ENCODE measurements at regions of chr21 and their contacts with region 1.

Region 1: DNA sequence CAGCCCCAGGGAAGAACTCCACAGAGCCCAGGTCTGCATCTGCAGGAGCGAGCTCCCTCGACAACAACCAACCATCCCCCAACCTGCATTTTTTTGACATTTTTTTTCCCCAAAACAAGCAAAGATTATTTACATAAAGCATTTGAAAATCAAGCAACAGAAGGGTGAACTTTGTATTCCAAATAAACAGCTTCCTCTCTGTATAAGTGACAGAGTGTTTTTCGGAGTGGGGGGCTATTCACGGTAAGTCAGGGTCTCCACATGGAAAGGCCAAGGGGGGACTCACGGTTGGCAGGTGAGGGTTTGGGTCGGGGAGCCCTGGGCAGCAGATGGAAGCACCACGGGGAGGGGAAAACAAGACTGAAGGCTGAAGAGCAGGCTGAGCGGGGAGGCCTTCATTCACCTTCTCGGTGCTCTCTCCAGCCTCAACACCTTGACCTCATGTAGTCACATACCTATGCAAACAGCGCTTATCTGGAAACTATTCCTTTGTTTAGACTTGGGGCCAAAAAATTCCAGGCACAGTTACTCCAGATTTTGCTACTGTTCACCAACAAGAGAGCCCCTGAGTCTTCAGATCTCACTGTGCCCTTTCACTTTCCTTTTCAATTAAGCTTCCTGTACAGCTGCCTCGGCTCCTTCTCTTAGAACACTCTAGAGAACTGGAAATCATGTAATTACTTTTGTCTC is 27.6 kb downstream of the C2CD2 start:
- DNase-seq: no peak
- H3K4me3 ChIP-seq: peak overlapping the region; percentile 39 to 58
- H3K27ac ChIP-seq: peak overlapping the region; percentile 92 to 97
- H3K4me1 ChIP-seq: peaks cover 12 to 35% of the 10 kb centered on the region in 2 donors
- H3K27me3 ChIP-seq: no peaks in the 10 kb centered on the region
- CTCF ChIP-seq: no peak

Region 2: DNA sequence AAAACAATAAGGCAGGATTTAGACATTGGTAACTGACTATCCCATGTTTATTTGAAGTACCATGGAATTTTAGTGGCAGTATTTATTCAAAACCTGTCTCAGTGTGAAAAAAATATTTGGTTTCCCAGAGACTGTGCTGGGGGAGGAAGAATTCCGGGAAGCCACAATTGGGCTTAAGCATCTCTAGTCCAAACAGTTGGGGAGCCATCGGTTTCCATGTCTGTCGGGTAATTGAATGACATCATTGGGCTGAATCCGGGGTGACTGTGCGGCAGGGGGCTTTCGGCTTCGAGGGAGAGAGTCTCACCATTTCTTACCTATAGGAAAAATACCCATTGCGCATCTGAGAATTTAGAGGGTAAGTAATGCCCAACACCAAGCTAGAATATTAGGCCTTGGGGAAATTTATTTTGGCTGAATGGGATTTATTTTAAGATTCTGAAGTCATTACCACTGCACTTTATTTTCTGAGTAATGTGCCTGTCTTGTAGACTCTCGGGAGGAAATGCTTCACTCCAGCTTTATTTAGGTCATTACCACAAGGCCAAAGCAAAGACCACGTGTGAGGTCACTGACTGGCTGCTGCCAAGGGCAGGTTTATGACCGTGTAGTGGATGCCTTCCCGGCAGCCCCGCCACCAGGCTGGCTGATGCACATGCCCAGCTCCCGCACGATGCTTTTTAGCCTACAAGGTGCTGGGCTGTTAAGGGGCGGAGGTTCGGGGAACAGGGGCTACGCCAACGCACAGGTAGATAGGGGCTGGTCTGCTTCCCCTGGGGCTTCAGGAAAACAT is 121.8 kb after region 1 on chr21:
- intact Hi-C with region 1: loop called (anchors 5 kb)
- DNase-seq: peak; percentile 80 to 96
- H3K4me3 ChIP-seq: no peak overlapping the region
- H3K27ac ChIP-seq: peak overlapping the region; percentile 88 to 90
- H3K4me1 ChIP-seq: peaks cover 4 to 20% of the 10 kb centered on the region in 2 donors
- H3K27me3 ChIP-seq: no peaks in the 10 kb centered on the region
- CTCF ChIP-seq: peak in 2 of 3 experiments; percentile 8 to 27

Region 3: GRCh38 chr21:42117229-42117966 is 191.1 kb after region 1 on chr21:
- intact Hi-C with region 1: loop called (anchors 5 kb)
- DNase-seq: peak in 1 of 2 donors; percentile 89
- H3K4me3 ChIP-seq: peak overlapping the region in 1 of 2 donors; percentile 32
- H3K27ac ChIP-seq: no peak overlapping the region
- H3K4me1 ChIP-seq: no peaks in the 10 kb centered on the region
- H3K27me3 ChIP-seq: no peaks in the 10 kb centered on the region
- CTCF ChIP-seq: peak; percentile 91 to 95 (median 95)